Breast epithelium (tissue), 4 donors: ENCODE measurements at regions of chrX and their contacts with region 1.

Region 1: DNA sequence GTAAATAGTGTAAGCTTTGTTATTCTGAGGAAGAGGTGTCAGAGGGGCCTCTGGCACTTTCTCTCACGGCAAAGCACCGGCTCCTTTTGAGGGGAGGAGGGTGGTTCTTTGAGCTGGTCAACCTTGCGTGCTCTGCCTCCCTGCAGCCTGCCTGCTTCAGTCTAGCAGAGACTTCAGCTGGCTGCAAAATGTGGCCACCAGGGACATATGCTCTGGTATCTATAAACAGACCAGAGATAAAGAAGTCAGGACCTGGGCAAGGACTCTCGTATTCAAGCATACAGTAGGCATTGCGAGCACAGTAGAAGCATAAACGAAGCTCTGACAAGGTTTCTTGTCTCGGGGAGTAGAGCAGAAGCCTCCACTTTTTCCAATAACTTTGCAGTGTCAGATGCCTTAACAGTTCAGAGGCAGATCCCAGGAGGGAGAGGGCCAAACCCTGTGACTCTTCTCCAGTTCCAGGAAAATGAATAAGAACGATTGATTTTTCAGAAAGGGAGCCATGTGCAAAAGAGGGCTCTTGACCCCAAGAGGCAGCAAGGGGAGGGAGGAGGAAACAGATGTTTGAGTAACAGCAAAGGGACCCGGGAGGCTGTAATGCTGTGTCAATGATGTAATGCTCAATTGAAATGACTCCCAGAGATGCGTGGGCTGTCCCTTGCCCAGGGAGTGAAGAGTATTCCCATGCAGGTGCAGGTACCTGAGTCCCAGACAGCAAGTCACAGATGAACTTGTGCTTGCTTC is 57.9 kb upstream of the TEX13D start:
- DNase-seq: no peak
- H3K4me3 ChIP-seq: no peak overlapping the region
- H3K27ac ChIP-seq: no peak overlapping the region
- H3K4me1 ChIP-seq: no peaks in the 10 kb centered on the region
- H3K27me3 ChIP-seq: peaks cover 0 to 5% of the 10 kb centered on the region in 2 donors
- CTCF ChIP-seq: no peak
- POLR2A ChIP-seq: no peak

Region 2: GRCh38 chrX:125089761-125090445 is 815.3 kb after region 1 on chrX:
- intact Hi-C with region 1: loop called (anchors 10 kb)
- DNase-seq: no peak
- H3K4me3 ChIP-seq: no peak overlapping the region
- H3K27ac ChIP-seq: no peak overlapping the region
- H3K4me1 ChIP-seq: no peaks in the 10 kb centered on the region
- H3K27me3 ChIP-seq: peaks cover 0 to 5% of the 10 kb centered on the region in 2 donors
- CTCF ChIP-seq: no peak
- POLR2A ChIP-seq: no peak